BJ (cell line): ENCODE measurements at regions of chr19 and their contacts with region 1.

Region 1: DNA sequence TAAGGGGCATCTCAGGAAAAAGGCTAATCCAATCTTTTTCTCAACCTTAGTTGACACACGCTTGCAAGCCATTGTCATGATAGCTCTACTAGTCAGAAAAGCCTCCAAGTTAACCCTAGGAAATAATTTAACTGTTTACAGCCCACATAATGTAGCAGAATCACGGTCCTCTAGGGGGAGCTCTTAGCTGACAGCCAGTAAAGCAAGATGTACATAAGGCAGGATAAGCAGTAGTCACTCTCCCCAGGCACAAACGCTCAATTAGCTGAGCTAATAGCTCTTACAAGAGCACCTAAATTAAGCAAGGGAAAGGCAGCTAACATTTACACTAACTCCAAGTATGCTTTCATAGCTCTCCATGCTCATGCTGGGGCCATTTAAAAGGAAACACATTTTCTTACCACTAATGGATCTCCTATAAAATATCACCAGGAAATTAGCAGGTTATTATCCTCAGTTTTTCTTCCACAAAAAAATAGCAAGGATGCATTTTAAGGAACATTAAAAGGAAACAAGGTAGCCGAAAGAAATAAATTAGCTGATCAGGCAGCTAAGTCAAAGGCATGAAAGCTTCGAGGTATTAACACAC is 33.7 kb upstream of the ZSCAN5A start:
- DNase-seq: no peak
- H3K4me3 ChIP-seq: no peak overlapping the region
- H3K27me3 ChIP-seq: no peaks in the 10 kb centered on the region
- CTCF ChIP-seq: peak; percentile 31; the same call in 1 of the 2 replicates

Region 2: GRCh38 chr19:56333505-56333904 is 14.9 kb before region 1 on chr19:
- CTCF ChIA-PET with region 1: interaction called, 11 read pairs
- POLR2A ChIA-PET with region 1: no interaction called
- DNase-seq: no peak
- H3K4me3 ChIP-seq: no peak overlapping the region
- H3K27me3 ChIP-seq: no peaks in the 10 kb centered on the region
- CTCF ChIP-seq: peak; percentile 76